Adrenal gland (tissue), 19 donors: ENCODE measurements at regions of chr21 and their contacts with region 1.

Region 1: GRCh38 chr21:45439161-45439872 is 34.4 kb downstream of the COL18A1 start:
- DNase-seq: peak; percentile 75 to 93 (median 85)
- H3K4me3 ChIP-seq: peak overlapping the region in 2 of 4 donors; percentile 11 to 44
- H3K27ac ChIP-seq: peak overlapping the region; percentile 15 to 93 (median 68)
- H3K4me1 ChIP-seq: peaks cover 0 to 17% of the 10 kb centered on the region in 2 donors
- H3K27me3 ChIP-seq: no peaks in the 10 kb centered on the region
- CTCF ChIP-seq: peak; percentile 95 to 99 (median 98)
- POLR2A ChIP-seq: no peak

Region 2: DNA sequence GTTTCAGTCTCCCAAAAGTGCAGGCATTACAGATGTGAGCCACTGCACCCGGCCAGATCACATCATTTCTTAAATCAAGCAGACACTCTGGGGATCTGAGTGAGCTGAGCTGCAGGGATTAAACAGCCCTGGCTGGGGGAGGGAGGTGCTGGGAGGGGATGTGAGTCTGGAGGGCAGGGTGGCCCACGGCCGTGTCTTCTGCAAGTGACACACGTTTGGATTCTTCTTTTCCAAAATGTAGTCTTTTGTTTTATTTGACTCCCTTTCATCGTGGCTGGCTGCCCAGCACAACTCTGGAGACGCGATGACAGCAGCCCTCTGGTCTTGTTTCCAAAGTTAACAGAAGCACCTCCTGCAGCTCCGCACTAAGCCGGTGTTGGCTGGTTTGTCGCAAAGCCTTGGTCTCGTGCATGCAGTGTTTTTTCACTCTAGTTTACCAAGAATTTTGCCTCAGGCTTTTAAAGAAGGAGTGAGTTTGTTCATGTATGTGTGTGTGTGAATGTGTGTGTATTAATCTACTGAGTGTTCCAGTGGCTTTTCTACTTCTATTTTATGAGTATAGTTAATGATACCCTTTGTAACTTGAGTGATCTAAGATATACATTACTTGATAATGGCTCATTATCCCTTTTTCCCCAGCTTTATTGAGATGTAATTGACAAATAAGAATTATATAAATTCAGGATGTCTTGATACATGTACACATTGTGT is 856.1 kb before region 1 on chr21:
- intact Hi-C with region 1: no loop called
- DNase-seq: no peak
- H3K4me3 ChIP-seq: no peak overlapping the region
- H3K27ac ChIP-seq: no peak overlapping the region
- H3K4me1 ChIP-seq: no peaks in the 10 kb centered on the region
- H3K27me3 ChIP-seq: peaks cover 15% of the 10 kb centered on the region
- CTCF ChIP-seq: no peak
- POLR2A ChIP-seq: no peak

Region 3: DNA sequence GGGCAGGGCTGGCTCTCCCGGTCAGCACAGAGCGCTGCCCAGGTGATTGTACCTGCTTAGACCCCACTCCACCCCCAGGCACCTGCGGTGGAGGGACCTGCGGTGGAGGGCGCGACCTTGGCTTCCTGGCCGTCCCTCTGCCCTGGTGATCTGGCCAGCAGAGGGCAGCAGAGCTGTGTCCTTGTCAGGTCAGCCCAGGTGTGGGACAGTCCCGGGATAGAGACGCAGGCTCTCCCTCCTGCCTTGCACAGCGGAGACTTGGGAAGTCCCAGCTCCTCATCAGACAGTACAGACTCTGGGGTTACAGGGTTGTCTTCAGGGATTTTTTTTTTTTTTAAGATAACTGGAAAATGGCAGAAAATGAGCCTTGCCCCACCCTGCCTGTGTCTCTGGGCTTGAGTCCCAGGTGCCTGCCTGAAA is 489.5 kb before region 1 on chr21:
- intact Hi-C with region 1: loop called in 1 of 2 experiments (anchors 10 kb)
- DNase-seq: peak; percentile 81 to 93 (median 90)
- H3K4me3 ChIP-seq: no peak overlapping the region
- H3K27ac ChIP-seq: peak overlapping the region in 1 of 5 donors; percentile 4
- H3K4me1 ChIP-seq: peaks cover 0 to 8% of the 10 kb centered on the region in 2 donors
- H3K27me3 ChIP-seq: no peaks in the 10 kb centered on the region
- CTCF ChIP-seq: peak; percentile 79 to 94 (median 91)
- POLR2A ChIP-seq: no peak

Region 4: DNA sequence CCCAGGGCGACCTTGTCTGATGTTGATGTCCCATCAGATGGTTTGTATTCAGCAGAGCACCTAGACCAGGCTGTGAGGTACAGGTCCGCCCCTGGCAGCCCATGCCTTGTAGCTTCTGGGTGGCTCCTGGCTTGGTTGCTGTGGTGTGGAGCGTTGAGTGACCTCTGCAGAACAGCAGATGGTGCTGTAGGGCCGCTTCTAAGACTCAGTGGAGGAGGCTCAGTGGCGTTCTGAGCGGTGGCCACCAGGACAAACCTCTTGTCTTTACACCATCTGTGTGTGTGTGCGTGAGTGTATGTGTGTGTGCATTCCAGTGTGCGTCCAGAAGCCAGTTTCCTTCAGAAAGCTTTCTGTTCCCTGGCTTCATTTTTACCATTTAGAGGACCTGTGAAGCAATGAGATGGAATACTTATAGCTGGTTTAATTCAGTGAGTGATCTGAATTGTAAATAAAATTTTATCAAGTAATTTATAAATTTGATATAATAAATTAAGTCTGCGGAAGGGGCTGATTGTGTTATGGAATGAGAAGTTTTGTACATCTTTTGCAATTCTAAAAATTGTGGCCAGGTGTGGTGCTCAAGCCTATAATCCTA is 298.9 kb before region 1 on chr21:
- intact Hi-C with region 1: loop called (anchors 5 to 10 kb)
- DNase-seq: peak; percentile 80 to 94 (median 88)
- H3K4me3 ChIP-seq: no peak overlapping the region
- H3K27ac ChIP-seq: no peak overlapping the region
- H3K4me1 ChIP-seq: peaks cover 6 to 7% of the 10 kb centered on the region in 2 donors
- H3K27me3 ChIP-seq: no peaks in the 10 kb centered on the region
- CTCF ChIP-seq: peak; percentile 81 to 98 (median 90)
- POLR2A ChIP-seq: no peak

Region 5: DNA sequence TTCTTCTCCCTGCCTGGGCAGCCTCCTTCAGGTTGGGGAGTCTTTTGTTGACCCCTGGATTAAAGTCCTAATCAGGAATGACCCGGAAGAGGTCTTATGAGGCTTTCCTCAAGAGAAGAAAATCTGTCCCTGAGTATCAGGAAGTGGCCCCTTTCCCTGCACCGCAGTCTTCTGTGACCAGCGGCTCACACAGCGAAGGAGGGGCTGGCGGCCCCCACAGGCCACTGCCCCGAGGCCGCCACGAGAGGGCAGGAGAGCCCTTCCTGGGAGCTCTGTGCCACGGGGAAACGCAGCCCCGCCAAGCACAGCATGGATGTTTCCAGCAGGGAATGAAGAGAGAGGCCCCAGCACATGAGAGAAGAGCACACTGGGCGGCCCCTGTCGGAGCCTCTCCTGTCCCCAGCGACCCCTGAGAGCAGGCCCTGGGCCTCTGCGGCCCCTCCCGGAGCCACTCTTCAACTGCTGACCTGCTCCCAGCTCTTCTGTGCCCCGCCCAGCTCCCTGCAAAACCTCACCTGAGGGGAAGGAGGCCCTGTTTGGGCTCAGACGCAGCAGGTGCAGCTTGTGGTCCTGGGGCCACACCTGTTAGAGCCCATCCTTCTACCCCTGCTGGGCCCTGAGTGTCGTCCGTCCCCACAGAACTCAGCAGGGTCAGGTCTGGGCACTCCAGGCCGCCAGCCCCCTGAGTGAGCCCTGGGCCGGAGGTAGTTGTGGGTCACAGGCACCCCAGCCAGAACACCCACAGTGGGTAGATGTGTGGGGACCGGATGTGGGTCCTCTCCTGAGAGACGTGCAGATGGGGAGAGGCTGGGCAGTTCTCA is 146.7 kb before region 1 on chr21:
- intact Hi-C with region 1: loop called (anchors 2 to 5 kb)
- DNase-seq: peak; percentile 89 to 95 (median 93)
- H3K4me3 ChIP-seq: no peak overlapping the region
- H3K27ac ChIP-seq: peak overlapping the region; percentile 68 to 99 (median 95)
- H3K4me1 ChIP-seq: peaks cover 45 to 65% of the 10 kb centered on the region in 2 donors
- H3K27me3 ChIP-seq: no peaks in the 10 kb centered on the region
- CTCF ChIP-seq: peak; percentile 97 to 100 (median 99)
- POLR2A ChIP-seq: peak in 1 of 2 donors; percentile 34

Region 6: DNA sequence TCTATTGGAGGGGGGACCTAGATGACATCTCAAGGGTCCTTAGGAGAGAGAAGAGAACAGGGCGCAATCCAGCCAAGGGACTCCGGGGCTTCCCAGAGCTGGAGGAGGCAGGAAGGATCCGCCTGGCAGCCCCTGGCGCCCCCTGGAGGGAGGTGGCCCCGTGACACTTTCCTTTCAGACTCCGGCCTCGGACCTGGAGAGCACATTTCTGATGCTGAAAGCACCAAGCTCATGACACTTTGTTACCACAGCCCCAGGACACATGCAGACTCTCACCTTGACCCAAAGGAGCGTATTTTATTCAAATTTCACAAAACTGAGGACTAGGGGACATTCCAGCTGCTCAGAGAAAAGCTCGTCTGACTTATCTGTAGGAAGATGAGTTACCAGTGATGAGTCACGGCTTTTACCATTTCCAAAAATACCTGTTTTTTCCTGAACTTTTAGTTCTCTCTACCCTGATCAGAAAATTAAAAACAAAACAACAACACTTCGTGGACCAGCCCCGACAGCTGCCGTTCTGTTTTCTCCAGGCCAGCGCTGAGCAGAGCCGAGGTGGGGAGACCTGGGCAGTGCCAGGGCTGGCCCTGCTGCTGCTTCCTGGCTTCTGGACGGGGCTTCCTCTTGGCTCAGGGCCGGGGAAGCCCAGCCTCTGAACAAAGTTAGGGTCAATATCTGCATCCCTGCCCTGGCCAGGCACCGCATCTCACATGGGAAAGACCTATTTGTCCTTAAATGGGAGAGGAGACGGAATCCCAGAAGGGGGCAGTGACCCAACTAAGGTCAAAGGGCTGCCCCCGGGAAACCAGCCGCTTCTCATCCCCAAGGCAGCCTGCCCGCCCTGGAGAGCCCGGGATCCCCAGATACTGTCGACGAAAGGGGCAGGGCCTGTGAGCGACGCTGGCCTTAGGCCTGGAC is 130.0 kb before region 1 on chr21:
- intact Hi-C with region 1: loop called in 1 of 2 experiments (anchors 5 kb)
- DNase-seq: peak; percentile 83 to 92 (median 86)
- H3K4me3 ChIP-seq: no peak overlapping the region
- H3K27ac ChIP-seq: peak overlapping the region; percentile 42 to 95 (median 75)
- H3K4me1 ChIP-seq: peaks cover 5 to 31% of the 10 kb centered on the region in 2 donors
- H3K27me3 ChIP-seq: no peaks in the 10 kb centered on the region
- CTCF ChIP-seq: peak; percentile 52 to 80 (median 72)
- POLR2A ChIP-seq: peak in 1 of 2 donors; percentile 24

Region 7: GRCh38 chr21:45386721-45387371 is 52.5 kb before region 1 on chr21:
- intact Hi-C with region 1: loop called in 1 of 2 experiments (anchors 5 kb)
- DNase-seq: peak; percentile 57 to 85 (median 78)
- H3K4me3 ChIP-seq: no peak overlapping the region
- H3K27ac ChIP-seq: peak overlapping the region in 3 of 5 donors; percentile 2 to 74 (median 67)
- H3K4me1 ChIP-seq: peaks cover 4 to 12% of the 10 kb centered on the region in 2 donors
- H3K27me3 ChIP-seq: no peaks in the 10 kb centered on the region
- CTCF ChIP-seq: peak; percentile 5 to 51 (median 36)
- POLR2A ChIP-seq: peak in 1 of 2 donors; percentile 16